ENCODE measurements at regions of chr17 and their contacts with region 1.

Region 1: GRCh38 chr17:48024937-48025906 is 12.4 kb downstream of the COPZ2 start:
- DNase-seq: peak; percentile 95 to 99 (median 98)
- ATAC-seq: peak; percentile 90
- H3K4me3 ChIP-seq: peak overlapping the region; percentile 66
- H3K4me3 Mint-ChIP-seq: peak overlapping the region; percentile 85
- H3K27ac ChIP-seq: no peak overlapping the region
- H3K27ac Mint-ChIP-seq: peak overlapping the region; percentile 78
- H3K4me1 ChIP-seq: peaks cover 34% of the 10 kb centered on the region
- H3K4me1 Mint-ChIP-seq: peaks cover 28% of the 10 kb centered on the region
- H3K27me3 ChIP-seq: peaks cover 13 to 14% of the 10 kb centered on the region in 2 experiments
- H3K27me3 Mint-ChIP-seq: peaks cover 71% of the 10 kb centered on the region
- CTCF ChIP-seq: peak; percentile 76

Region 2: DNA sequence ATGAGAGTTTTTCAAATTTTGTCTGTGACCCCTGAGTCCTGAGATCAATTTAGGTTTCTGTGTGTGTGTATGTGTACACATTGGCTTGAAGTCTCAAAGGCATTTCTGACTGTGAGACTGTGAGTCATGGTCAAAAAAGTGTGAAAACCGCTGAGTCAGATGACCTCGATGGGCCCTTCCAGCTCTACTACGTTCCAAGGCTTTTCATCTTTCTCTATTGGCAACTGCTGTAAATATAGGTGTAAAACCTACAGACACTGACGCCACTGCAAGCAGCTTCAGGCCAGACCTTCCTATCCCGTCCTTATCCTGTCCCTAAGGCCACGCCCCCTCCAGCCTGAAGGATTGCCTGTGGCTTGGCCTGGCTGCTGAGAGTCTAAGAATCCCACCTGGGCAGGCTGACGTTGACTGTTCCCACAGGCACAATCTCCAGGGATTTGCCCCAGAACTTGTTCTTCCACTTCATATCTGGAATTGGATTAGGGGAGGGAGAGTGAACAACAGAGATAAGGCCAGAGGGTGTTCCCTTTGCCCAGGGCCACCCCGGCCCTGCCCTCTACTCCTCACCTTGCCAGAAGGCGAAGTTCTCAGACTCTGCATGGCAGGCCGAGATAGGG is 214.9 kb before region 1 on chr17:
- CTCF ChIA-PET with region 1: no interaction called
- POLR2A ChIA-PET with region 1: no interaction called
- intact Hi-C with region 1: no loop called
- DNase-seq: peak in 4 of 14 experiments; percentile 8 to 64 (median 38)
- ATAC-seq: no peak
- H3K4me3 ChIP-seq: no peak overlapping the region
- H3K4me3 Mint-ChIP-seq: no peak overlapping the region
- H3K27ac ChIP-seq: no peak overlapping the region
- H3K27ac Mint-ChIP-seq: no peak overlapping the region
- H3K4me1 ChIP-seq: peaks cover 5% of the 10 kb centered on the region
- H3K4me1 Mint-ChIP-seq: no peaks in the 10 kb centered on the region
- H3K27me3 ChIP-seq: no peaks in the 10 kb centered on the region
- H3K27me3 Mint-ChIP-seq: no peaks in the 10 kb centered on the region
- CTCF ChIP-seq: no peak

Region 3: GRCh38 chr17:48011405-48012150 is 13.6 kb before region 1 on chr17:
- CTCF ChIA-PET with region 1: interaction called, 17 read pairs
- POLR2A ChIA-PET with region 1: no interaction called
- intact Hi-C with region 1: no loop called
- DNase-seq: peak in 11 of 14 experiments; percentile 18 to 68 (median 39)
- ATAC-seq: peak; percentile 76
- H3K4me3 ChIP-seq: peak overlapping the region; percentile 43
- H3K4me3 Mint-ChIP-seq: peak overlapping the region; percentile 71
- H3K27ac ChIP-seq: no peak overlapping the region
- H3K27ac Mint-ChIP-seq: no peak overlapping the region
- H3K4me1 ChIP-seq: peaks cover 14% of the 10 kb centered on the region
- H3K4me1 Mint-ChIP-seq: peaks cover 16% of the 10 kb centered on the region
- H3K27me3 ChIP-seq: peaks cover 32 to 46% of the 10 kb centered on the region in 2 experiments
- H3K27me3 Mint-ChIP-seq: peaks cover 66% of the 10 kb centered on the region
- CTCF ChIP-seq: peak; percentile 46

Region 4: DNA sequence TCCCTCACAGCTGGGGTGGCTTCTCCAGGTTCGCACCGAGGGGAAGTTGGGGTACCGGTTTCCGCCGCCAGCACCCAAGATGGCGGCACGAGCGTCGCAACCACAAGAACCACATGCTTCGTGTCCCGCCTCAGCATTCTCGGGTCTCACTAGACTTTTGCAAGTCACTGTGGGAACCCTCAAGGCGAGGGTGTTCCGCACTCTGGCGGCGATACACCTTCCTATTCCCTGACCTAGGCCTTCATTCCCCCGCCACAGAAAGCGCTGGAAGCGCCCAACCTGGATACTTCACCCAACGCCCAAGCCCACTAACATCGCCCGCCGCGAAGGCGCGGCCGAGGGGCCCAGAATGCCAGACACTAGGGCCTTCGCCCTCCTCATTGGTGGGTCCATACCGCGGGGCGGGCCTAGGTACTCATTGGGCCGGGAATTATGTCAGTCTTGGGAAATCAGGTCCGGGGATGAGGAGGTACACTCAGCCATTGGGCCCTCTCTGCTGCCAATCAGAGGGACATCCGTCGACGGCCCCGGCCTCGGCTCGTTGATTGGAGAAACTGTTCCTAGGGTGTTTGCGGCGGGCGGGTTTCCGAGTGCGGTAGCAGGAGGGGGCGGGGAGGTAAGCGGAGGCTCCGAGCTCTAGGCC is 22.6 kb after region 1 on chr17 and contains the start of gene NFE2L1:
- CTCF ChIA-PET with region 1: interaction called, 35 read pairs
- POLR2A ChIA-PET with region 1: interaction called, 20 read pairs
- intact Hi-C with region 1: loop called (anchors 1 kb)
- DNase-seq: peak; percentile 92 to 100 (median 96)
- ATAC-seq: peak; percentile 96
- H3K4me3 ChIP-seq: peak within 1 kb of the TSS; percentile 81
- H3K4me3 Mint-ChIP-seq: peak within 1 kb of the TSS; percentile 93
- H3K27ac ChIP-seq: peak within 1 kb of the TSS; percentile 82 to 91
- H3K27ac Mint-ChIP-seq: peak within 1 kb of the TSS; percentile 94
- H3K4me1 ChIP-seq: peaks cover 55% of the 10 kb centered on the region
- H3K4me1 Mint-ChIP-seq: peaks cover 58% of the 10 kb centered on the region
- H3K27me3 ChIP-seq: no peaks in the 10 kb centered on the region
- H3K27me3 Mint-ChIP-seq: no peaks in the 10 kb centered on the region
- CTCF ChIP-seq: no peak
- total RNA-seq, gene NFE2L1: 28.1 to 30.6 TPM

Region 5: GRCh38 chr17:48074315-48075081 is 49.3 kb after region 1 on chr17:
- CTCF ChIA-PET with region 1: interaction called, 37 read pairs
- POLR2A ChIA-PET with region 1: interaction called, 6 read pairs
- intact Hi-C with region 1: loop called (anchors 1 kb)
- DNase-seq: peak; percentile 55 to 84 (median 70)
- ATAC-seq: peak; percentile 86
- H3K4me3 ChIP-seq: no peak overlapping the region
- H3K4me3 Mint-ChIP-seq: no peak overlapping the region
- H3K27ac ChIP-seq: no peak overlapping the region
- H3K27ac Mint-ChIP-seq: no peak overlapping the region
- H3K4me1 ChIP-seq: no peaks in the 10 kb centered on the region
- H3K4me1 Mint-ChIP-seq: no peaks in the 10 kb centered on the region
- H3K27me3 ChIP-seq: no peaks in the 10 kb centered on the region
- H3K27me3 Mint-ChIP-seq: no peaks in the 10 kb centered on the region
- CTCF ChIP-seq: peak; percentile 85

Region 6: GRCh38 chr17:48107168-48108132 is 82.2 kb after region 1 on chr17 and contains the start of gene SNX11:
- CTCF ChIA-PET with region 1: interaction called, 4 read pairs
- POLR2A ChIA-PET with region 1: interaction called, 3 read pairs
- intact Hi-C with region 1: loop called in 1 of 2 experiments (anchors 1 kb)
- DNase-seq: peak; percentile 86 to 97 (median 94)
- ATAC-seq: peak; percentile 93
- H3K4me3 ChIP-seq: peak within 1 kb of the TSS; percentile 92
- H3K4me3 Mint-ChIP-seq: peak within 1 kb of the TSS; percentile 97
- H3K27ac ChIP-seq: peak within 1 kb of the TSS; percentile 84 to 93
- H3K27ac Mint-ChIP-seq: peak within 1 kb of the TSS; percentile 88
- H3K4me1 ChIP-seq: peaks cover 40% of the 10 kb centered on the region
- H3K4me1 Mint-ChIP-seq: peaks cover 63% of the 10 kb centered on the region
- H3K27me3 ChIP-seq: no peaks in the 10 kb centered on the region
- H3K27me3 Mint-ChIP-seq: no peaks in the 10 kb centered on the region
- CTCF ChIP-seq: no peak
- total RNA-seq, gene SNX11: 6.8 to 8.7 TPM

Region 7: DNA sequence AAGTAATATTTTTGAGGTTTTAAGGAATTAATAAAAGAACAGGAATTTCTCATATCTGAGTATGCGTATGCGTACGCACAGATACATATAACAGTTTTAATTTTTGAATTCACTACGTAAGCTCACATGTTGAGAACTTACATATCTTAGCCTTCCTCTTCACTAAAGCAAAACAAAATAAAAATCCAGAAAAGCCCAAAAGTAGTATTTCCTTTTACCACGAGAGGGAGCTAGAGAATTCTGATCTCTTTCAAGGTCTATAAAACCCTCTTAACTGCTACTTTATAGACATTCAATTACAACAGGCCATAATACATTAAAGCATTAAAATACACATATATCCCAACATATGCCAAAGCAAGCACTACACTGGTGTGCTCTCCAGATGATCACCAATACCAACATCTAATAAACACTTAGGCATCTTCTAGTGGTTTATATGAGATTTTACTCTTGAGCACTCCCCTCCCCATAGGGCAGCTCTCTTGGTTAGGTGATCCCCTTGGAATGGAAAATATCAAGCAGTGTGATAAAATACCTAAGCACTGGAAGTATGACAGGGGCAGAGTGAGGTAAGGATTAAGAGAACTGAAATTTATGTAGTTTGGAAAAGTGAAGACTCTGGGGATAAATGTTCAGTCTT is 310.8 kb after region 1 on chr17:
- CTCF ChIA-PET with region 1: no interaction called
- POLR2A ChIA-PET with region 1: no interaction called
- intact Hi-C with region 1: loop called (anchors 5 to 10 kb)
- DNase-seq: peak in 3 of 14 experiments; percentile 74 to 79 (median 76)
- ATAC-seq: peak; percentile 66
- H3K4me3 ChIP-seq: no peak overlapping the region
- H3K4me3 Mint-ChIP-seq: no peak overlapping the region
- H3K27ac ChIP-seq: no peak overlapping the region
- H3K27ac Mint-ChIP-seq: no peak overlapping the region
- H3K4me1 ChIP-seq: no peaks in the 10 kb centered on the region
- H3K4me1 Mint-ChIP-seq: peaks cover 6% of the 10 kb centered on the region
- H3K27me3 ChIP-seq: no peaks in the 10 kb centered on the region
- H3K27me3 Mint-ChIP-seq: no peaks in the 10 kb centered on the region
- CTCF ChIP-seq: peak; percentile 85

Region 8: GRCh38 chr17:48892940-48893645 is 867.9 kb after region 1 on chr17:
- CTCF ChIA-PET with region 1: no interaction called
- POLR2A ChIA-PET with region 1: no interaction called
- intact Hi-C with region 1: loop called in 1 of 2 experiments (anchors 10 kb)
- DNase-seq: peak in 2 of 14 experiments; percentile 43 to 49
- ATAC-seq: no peak
- H3K4me3 ChIP-seq: peak overlapping the region; percentile 74
- H3K4me3 Mint-ChIP-seq: peak overlapping the region; percentile 90
- H3K27ac ChIP-seq: peak overlapping the region; percentile 80 to 86
- H3K27ac Mint-ChIP-seq: peak overlapping the region; percentile 91
- H3K4me1 ChIP-seq: peaks cover 25% of the 10 kb centered on the region
- H3K4me1 Mint-ChIP-seq: peaks cover 22% of the 10 kb centered on the region
- H3K27me3 ChIP-seq: no peaks in the 10 kb centered on the region
- H3K27me3 Mint-ChIP-seq: no peaks in the 10 kb centered on the region
- CTCF ChIP-seq: no peak